Activated CD4-positive, alpha-beta T cell treated with anti-CD3 and anti-CD28 coated beads, Interleukin-2, amount 10 ng/mL, durations not matched to agents 24 days and 14 days (primary cell): ENCODE measurements at regions of chr5 and their contacts with region 1.

Region 1: DNA sequence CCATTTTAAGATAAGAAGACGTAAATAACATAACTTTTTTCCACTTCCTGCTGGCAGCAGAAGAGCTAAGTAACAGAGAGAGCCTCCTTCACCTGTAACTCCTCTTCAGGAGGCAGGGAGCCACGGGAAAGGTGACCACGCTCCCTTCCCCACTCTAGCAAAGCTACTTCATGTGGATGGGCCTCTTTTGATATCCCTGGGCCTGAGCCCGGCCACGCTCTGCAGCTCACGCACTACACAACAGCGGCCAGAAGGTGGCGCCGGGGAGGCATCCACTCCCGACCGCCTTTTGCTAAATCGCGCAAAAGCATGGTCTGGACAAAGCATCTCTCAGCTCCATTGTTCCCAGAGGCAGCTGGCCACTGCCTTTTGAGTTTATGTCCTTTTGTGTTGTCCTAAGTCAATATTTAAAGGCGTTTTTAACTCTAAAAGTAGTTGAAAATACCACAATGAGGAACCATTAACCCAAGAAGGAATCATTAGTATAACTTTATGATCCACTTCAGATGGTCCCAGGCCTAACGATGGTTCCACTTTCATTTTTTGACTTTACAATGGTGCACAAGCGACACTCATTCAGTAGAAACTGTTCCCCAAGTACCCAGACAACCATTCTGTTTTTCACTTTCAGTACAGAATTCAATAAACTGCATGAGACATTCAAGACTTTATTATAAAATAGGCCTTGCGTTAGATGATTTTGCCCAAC is 23.6 kb downstream of the CMBL start:
- DNase-seq: peak; percentile 93
- H3K4me3 Mint-ChIP-seq: no peak overlapping the region
- H3K27ac Mint-ChIP-seq: no peak overlapping the region
- H3K4me1 Mint-ChIP-seq: peaks cover 7% of the 10 kb centered on the region
- H3K27me3 Mint-ChIP-seq: peaks cover 2% of the 10 kb centered on the region

Region 2: GRCh38 chr5:10364186-10364683 is 80.2 kb after region 1 on chr5:
- intact Hi-C with region 1: loop called (anchors 1 kb)
- DNase-seq: peak; percentile 70
- H3K4me3 Mint-ChIP-seq: no peak overlapping the region
- H3K27ac Mint-ChIP-seq: no peak overlapping the region
- H3K4me1 Mint-ChIP-seq: peaks cover 22% of the 10 kb centered on the region
- H3K27me3 Mint-ChIP-seq: no peaks in the 10 kb centered on the region

Region 3: GRCh38 chr5:10424124-10424731 is 140.1 kb after region 1 on chr5:
- intact Hi-C with region 1: loop called (anchors 2 kb)
- DNase-seq: no peak
- H3K4me3 Mint-ChIP-seq: no peak overlapping the region
- H3K27ac Mint-ChIP-seq: no peak overlapping the region
- H3K4me1 Mint-ChIP-seq: peaks cover 28% of the 10 kb centered on the region
- H3K27me3 Mint-ChIP-seq: no peaks in the 10 kb centered on the region

Region 4: DNA sequence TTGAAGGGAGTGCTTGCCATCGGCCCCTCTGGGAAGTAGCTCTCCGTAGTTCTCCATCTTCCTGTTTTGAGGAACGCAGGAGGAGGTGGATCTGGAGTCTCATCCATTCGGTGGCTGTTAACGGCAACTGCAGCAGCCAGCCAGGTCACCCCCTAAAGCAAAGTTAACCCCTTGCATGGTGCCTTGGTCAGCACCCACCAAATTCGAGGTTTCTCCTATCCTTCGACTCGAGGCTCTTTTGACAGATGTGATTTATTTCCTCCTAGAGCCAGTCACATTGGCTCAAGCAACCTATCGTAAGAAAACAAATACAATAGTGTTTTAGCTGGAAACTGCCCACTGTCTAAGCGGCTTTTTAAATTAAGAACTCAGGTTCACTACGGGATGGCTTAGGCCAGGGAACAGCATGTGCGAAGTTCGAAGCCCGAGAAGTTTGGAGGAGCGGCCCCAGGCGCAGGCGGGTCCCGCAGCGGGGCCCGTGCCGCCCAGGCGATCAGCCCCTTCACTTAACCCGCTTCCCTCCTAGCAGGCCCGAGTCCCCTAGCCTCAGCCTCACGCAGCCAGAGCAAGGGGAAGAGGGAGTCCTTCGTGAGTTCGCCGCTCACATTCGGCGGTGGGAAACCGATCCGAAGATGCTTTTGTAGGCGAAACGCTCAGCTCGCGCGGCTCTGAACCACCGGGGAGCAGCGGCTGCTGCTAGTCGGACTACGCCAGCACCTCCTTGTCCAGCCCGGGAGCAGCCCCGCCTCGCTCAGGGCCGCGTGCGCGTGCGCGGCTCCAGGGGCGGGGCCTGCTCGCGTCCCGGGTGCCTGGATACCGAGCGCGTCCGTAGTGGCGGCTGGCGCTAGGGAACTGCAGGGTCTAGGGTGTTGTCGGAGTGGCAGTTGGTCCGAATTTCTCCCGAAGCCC is 157.3 kb after region 1 on chr5 and contains the start of gene ROPN1L:
- intact Hi-C with region 1: loop called (anchors 5 kb)
- DNase-seq: peak; percentile 96
- H3K4me3 Mint-ChIP-seq: peak within 1 kb of the TSS; percentile 88
- H3K27ac Mint-ChIP-seq: no peak within 1 kb of the TSS
- H3K4me1 Mint-ChIP-seq: peaks cover 31% of the 10 kb centered on the region
- H3K27me3 Mint-ChIP-seq: peaks cover 7% of the 10 kb centered on the region
- total RNA-seq, gene ROPN1L: not detected in 2 replicates

Region 5: DNA sequence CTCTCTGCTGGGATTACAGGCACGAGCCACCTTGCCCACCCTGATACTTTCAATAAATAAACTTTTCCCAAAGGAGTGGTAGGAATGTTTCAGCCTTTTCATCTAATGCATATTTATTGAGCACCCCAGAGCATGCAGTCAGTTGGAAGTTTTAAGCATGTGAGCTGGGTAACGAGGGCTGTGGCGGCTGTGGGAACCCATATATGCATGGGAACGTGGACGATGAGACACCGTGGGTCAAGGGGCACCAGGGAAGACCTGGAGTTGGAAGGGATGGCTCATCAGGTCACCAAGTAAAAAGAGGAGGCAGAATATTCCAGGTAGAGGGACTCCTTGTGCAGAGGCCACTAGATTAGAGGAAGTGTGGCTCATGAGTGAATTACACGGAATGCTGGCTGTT is 344.5 kb after region 1 on chr5:
- intact Hi-C with region 1: loop called (anchors 1 kb)
- DNase-seq: no peak
- H3K4me3 Mint-ChIP-seq: no peak overlapping the region
- H3K27ac Mint-ChIP-seq: peak overlapping the region; percentile 34
- H3K4me1 Mint-ChIP-seq: peaks cover 63% of the 10 kb centered on the region
- H3K27me3 Mint-ChIP-seq: no peaks in the 10 kb centered on the region